A673 (cell line): ENCODE measurements at regions of chr17 and their contacts with region 1.

Region 1: GRCh38 chr17:17269926-17270773 is 10.9 kb downstream of the COPS3 start:
- DNase-seq: no peak
- H3K4me3 ChIP-seq: no peak overlapping the region
- H3K27ac ChIP-seq: no peak overlapping the region
- H3K4me1 ChIP-seq: no peaks in the 10 kb centered on the region
- H3K27me3 ChIP-seq: no peaks in the 10 kb centered on the region
- CTCF ChIP-seq: peak; percentile 42

Region 2: DNA sequence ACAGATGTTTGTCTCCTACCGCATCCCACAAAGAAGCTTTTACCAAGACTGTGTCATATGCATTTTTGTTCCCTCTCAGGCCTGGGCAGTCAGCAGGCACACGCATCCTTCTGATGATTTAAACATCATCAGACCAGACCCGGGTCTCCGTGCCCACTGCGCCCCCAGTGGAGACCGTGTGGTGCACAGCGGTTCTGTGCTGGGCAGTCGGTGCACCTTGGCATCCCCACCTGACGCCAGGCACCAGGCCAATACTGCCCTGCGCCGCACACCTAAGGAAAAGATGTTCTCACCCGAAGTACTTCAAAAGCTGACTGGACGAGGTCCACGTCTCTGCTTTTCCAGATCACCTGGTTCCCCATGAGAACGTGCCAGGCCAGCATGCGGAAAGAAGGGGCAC is 53.4 kb before region 1 on chr17:
- CTCF ChIA-PET with region 1: no interaction called
- POLR2A ChIA-PET with region 1: no interaction called
- intact Hi-C with region 1: loop called (anchors 5 kb)
- DNase-seq: no peak
- H3K4me3 ChIP-seq: no peak overlapping the region
- H3K27ac ChIP-seq: no peak overlapping the region
- H3K4me1 ChIP-seq: no peaks in the 10 kb centered on the region
- H3K27me3 ChIP-seq: no peaks in the 10 kb centered on the region
- CTCF ChIP-seq: no peak

Region 3: DNA sequence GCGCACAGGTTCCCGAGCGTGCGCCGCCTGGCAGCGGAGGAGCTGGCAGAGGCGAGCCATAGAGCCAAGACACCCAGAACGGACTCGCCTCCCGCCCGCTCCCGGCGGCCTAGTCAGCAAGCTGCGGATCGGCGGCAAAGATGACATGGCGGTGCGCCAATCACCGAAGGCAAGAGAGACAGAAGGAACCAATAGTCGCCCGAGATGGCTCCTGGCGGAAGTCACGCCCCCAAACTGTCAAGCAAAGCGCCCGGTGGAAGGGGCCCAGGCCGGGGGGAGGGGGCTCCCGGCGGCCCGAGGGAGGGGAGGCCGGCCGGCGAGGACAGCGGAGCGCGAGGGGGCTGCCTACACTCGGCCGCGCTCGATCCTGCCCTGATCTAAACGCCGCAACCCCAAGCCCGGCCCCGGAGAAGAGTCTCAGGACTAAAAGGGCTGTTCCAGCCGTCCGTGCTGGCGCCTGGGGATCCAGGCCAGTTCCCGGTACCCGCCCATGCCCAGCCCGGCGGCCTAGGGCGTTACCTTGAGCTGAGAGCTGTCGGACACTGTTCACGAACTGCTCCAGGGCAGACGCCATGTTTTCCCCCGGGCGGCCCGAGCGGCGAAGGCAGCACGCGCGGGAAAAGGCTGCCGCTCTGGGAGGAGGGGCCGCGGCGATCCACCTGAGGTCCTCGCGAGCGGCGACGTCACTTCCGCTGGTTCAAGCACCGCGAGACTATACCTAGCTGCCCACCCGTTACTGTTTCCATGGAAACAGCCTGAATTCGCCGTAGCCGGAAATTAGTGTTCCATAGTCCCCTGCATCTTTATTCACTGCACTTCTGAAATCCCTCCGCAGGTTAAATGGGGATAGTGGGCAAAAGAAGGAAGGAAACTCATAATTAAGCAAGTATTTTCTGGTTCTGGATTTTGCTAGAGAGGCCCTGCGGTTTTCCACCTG is 10.7 kb after region 1 on chr17 and contains the start of gene COPS3:
- CTCF ChIA-PET with region 1: interaction called, 3 read pairs
- POLR2A ChIA-PET with region 1: interaction called, 10 read pairs
- intact Hi-C with region 1: no loop called
- DNase-seq: peak; percentile 99
- H3K4me3 ChIP-seq: peak within 1 kb of the TSS; percentile 80
- H3K27ac ChIP-seq: peak within 1 kb of the TSS; percentile 99
- H3K4me1 ChIP-seq: peaks cover 8% of the 10 kb centered on the region
- H3K27me3 ChIP-seq: no peaks in the 10 kb centered on the region
- CTCF ChIP-seq: no peak
- total RNA-seq, gene COPS3: 157 and 171 TPM in 2 replicates

Region 4: GRCh38 chr17:17303010-17303846 is 33.1 kb after region 1 on chr17 and contains the start of gene NT5M:
- CTCF ChIA-PET with region 1: no interaction called
- POLR2A ChIA-PET with region 1: no interaction called
- intact Hi-C with region 1: no loop called
- DNase-seq: peak; percentile 86
- H3K4me3 ChIP-seq: peak within 1 kb of the TSS; percentile 63
- H3K27ac ChIP-seq: peak within 1 kb of the TSS; percentile 50
- H3K4me1 ChIP-seq: no peaks in the 10 kb centered on the region
- H3K27me3 ChIP-seq: no peaks in the 10 kb centered on the region
- CTCF ChIP-seq: no peak
- total RNA-seq, gene NT5M: 2.6 and 4.8 TPM in 2 replicates